ENCODE measurements at regions of chr4 and their contacts with region 1.

Region 1: GRCh38 chr4:67327262-67328017 is 217.9 kb downstream of the CENPC start:
- DNase-seq: peak in 1 of 3 donors; percentile 54
- ATAC-seq: peak; percentile 88 to 96 (median 92)
- H3K4me3 ChIP-seq: no peak overlapping the region
- H3K27ac ChIP-seq: no peak overlapping the region
- H3K4me1 ChIP-seq: no peaks in the 10 kb centered on the region
- H3K27me3 ChIP-seq: no peaks in the 10 kb centered on the region
- CTCF ChIP-seq: peak; percentile 82 to 90 (median 87)
- POLR2A ChIP-seq: no peak

Region 2: DNA sequence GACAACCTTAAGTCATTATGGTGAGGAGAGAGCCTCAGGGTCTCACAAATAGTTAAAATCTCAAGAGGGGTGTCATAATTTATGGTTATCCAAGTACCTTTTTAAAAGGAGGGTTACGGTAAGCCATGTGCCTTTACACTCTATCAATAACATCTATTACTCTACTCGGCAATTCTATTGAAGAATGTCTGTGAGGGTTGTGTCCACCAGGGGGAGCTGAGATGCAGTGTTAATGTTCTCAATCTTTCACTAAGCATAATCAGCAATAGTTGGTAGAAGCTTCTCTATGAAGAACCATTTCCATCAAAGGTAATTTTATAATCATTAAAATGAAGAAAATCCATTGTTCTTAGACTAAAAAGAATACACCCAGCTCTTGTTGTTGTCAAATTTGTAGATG is 239.5 kb before region 1 on chr4:
- intact Hi-C with region 1: loop called in 1 of 2 experiments (anchors 10 kb)
- DNase-seq: peak in 2 of 3 donors; percentile 27 to 63
- ATAC-seq: peak; percentile 88 to 91 (median 90)
- H3K4me3 ChIP-seq: no peak overlapping the region
- H3K27ac ChIP-seq: no peak overlapping the region
- H3K4me1 ChIP-seq: no peaks in the 10 kb centered on the region
- H3K27me3 ChIP-seq: no peaks in the 10 kb centered on the region
- CTCF ChIP-seq: peak; percentile 68 to 79 (median 76)
- POLR2A ChIP-seq: no peak